ENCODE measurements at regions of chr3 and their contacts with region 1.

Region 1: DNA sequence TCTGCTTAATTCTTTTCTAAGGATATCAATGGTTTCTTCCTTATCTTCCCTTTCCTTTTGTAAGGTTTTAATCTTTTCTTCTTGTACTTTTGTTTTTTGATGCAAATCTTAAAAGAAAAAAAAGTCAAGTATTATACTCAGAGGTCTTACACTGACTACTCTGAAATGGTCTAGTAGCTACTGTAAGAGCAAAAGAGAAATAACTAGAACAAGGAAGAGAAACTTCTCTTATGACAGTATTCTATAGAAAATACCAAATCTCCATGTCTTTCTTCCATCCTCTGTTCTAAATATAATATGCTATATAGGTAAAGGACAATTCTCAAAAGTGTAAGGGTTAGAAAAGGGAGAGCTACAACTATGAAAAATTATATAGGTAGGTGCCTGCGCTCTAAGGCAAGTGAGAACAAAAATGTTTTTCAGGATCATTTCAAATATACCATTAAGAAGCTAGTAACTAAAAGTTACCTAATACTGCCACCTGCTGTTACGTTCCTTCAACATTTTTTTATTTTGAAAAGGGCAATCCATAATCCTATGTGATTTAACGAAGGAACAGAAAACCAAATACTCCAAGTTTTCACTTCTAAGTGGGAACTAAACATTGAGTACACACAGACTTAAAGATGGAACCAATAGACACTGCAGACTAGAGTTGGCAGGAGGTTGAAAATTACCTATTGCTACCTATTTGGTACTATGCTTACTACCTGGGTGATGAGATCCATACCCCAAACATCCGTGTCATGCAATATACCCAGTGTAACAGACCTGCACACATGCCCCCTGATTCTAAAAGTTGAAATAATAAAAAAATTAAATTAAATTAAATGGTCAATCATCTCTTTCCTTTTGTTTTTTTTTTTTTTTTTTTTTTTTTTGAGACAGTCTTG is 36.7 kb downstream of the CIP2A start:
- DNase-seq: no peak
- H3K4me3 ChIP-seq: no peak overlapping the region
- H3K27ac ChIP-seq: no peak overlapping the region
- H3K4me1 ChIP-seq: no peaks in the 10 kb centered on the region
- H3K27me3 ChIP-seq: no peaks in the 10 kb centered on the region
- CTCF ChIP-seq: peak in 3 of 4 experiments; percentile 14 to 42 (median 21)
- EP300 ChIP-seq: no peak
- POLR2A ChIP-seq: no peak

Region 2: DNA sequence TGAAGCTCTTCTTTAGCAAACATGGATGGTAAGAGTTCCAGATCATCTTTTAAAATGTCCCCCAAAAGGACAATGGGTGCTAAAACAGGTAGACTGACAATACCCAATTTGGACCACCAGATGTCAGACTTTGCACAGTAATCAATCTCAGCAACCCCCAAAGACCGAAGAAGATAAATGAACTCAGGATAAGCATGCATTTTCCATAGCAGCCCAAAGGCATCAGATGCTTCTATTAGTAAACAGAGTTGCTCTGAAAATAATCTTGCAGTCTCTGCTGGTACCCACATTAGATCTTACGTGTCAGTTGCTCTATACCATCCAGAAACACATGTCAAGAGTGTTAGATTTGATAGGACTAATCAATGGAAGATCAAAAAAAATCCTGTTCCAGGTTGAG is 62.7 kb before region 1 on chr3:
- intact Hi-C with region 1: loop called (anchors 2 kb)
- DNase-seq: no peak
- H3K4me3 ChIP-seq: no peak overlapping the region
- H3K27ac ChIP-seq: no peak overlapping the region
- H3K4me1 ChIP-seq: peaks cover 0 to 11% (median 0%) of the 10 kb centered on the region in 4 donors
- H3K27me3 ChIP-seq: no peaks in the 10 kb centered on the region
- CTCF ChIP-seq: peak; percentile 17 to 56 (median 48)
- EP300 ChIP-seq: no peak
- POLR2A ChIP-seq: no peak

Measured in sigmoid colon (tissue), 7 donors.